ENCODE measurements at regions of chr2 and their contacts with region 1.

Region 1: DNA sequence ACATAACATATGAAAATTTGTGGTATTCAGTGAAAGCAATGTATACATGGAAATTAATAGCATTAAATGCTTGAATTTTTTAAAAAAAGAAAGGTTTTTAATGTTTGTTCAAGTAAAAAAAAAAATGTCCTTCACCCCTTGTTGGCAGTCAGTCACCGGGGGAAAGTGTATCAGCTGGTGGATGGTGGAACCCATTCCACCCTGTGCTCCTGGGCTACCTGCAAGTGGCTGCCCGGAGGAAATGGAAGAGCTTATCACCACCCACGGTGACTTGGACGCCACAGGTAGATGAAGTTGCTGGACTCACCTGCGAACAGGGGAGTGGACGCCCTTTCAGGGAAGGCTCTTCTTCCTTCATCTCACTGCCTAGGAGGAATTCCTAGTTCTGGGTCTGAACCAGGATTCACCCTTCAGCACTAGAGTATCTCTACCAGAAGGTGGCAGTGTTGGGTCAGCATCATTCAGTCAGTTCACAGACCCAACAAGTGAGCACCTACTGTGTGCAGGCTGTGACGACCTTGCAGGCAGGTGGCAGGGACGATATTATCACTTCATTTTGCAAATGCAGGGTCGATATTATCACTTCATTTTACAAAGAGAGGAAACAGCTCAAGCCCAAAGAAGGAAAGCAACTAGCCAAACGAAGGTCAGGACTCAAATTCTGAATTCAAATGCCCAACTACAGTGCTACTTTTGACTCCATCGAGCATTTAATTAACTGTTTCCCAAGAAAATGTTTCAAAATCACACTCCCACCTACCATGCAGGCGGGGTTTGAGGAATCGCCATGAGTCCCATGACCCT is 35.8 kb downstream of the CIB4 start:
- DNase-seq: no peak
- H3K4me3 ChIP-seq: no peak overlapping the region
- H3K27ac ChIP-seq: no peak overlapping the region
- H3K4me1 ChIP-seq: peaks cover 0 to 5% (median 0%) of the 10 kb centered on the region in 4 donors
- H3K27me3 ChIP-seq: peaks cover 0 to 5% (median 0%) of the 10 kb centered on the region in 4 donors
- CTCF ChIP-seq: peak; percentile 82 to 85 (median 83)
- EP300 ChIP-seq: no peak
- POLR2A ChIP-seq: no peak

Region 2: DNA sequence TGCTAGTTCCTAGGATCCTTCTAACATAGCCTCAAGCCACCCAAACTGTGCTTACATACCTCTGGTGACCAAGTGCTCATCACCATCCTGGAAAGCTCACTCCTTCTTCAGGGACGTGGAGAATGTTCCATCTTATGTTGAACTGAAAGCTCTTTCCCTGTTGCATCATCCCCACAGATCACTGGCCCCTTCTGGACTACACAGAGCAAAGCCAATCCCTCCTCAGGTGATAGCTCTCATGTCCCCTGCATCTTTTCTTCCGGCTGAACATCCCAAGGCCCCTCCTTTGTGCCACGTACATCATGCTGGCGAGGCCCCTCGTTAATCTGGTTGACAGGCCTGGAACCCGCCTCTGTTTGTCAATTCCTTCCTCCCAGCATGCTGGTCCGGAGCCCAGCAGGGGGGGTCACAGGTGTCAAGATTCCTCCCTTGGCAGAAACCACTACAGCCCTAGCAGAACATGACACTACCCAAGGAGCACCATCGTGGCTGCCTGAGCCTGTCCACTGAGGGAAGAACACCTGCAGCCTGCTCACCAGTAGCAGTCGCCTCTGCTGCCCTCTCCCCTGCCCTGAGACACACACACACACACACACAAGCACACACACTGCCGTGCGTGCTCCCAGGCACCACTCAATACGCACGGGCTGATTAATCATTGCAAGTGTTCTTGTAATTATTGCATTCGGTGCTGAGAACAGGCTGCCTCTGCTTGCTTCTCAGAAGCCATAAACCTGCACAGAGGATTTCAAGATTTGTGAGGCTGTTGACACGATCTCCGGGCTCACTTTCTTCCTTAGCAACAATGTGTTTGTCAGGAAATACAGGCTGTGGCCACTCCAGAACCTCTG is 80.8 kb after region 1 on chr2:
- intact Hi-C with region 1: loop called (anchors 10 kb)
- DNase-seq: no peak
- H3K4me3 ChIP-seq: no peak overlapping the region
- H3K27ac ChIP-seq: no peak overlapping the region
- H3K4me1 ChIP-seq: peaks cover 8 to 49% (median 33%) of the 10 kb centered on the region in 4 donors
- H3K27me3 ChIP-seq: no peaks in the 10 kb centered on the region
- CTCF ChIP-seq: no peak
- EP300 ChIP-seq: no peak
- POLR2A ChIP-seq: no peak

Region 3: DNA sequence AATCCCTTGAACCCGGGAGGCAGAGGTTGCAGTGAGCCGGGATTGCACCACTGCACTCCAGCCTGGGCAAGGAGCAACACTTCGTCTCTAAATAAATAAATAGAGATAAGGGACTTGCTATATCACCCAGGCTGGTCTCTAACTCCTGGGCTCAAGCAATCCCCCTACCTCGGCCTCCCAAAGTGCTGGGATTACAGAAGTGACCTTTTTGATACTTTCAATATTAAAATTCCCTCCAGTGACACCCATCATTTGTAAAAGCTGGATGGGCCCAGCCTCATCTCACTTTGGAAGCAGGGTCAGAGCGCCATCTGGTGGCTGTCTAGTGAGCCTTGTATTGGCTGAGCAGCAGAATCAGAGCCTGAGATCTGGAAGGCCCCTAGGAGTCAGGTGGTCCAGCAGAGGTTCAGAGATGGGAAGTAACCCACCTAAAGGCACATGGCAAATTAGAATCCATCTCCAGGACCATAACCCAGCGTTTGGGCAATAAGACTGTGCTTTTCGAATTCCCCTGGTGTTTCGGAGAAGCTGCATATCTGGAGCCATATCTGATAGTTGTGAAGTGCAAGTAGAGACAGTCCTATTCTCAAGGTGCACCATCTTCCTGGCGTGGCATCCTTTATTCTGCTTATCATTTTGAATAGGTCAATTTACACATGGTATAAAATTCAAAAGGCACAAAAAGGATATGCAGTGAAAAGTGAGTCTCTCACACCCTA is 140.4 kb after region 1 on chr2:
- intact Hi-C with region 1: loop called (anchors 1 kb)
- DNase-seq: no peak
- H3K4me3 ChIP-seq: no peak overlapping the region
- H3K27ac ChIP-seq: no peak overlapping the region
- H3K4me1 ChIP-seq: peaks cover 0 to 6% (median 3%) of the 10 kb centered on the region in 4 donors
- H3K27me3 ChIP-seq: no peaks in the 10 kb centered on the region
- CTCF ChIP-seq: peak; percentile 92 to 95 (median 94)
- EP300 ChIP-seq: no peak
- POLR2A ChIP-seq: no peak

Measured in esophagus muscularis mucosa (tissue), 4 donors.